ENCODE measurements at regions of chr19 and their contacts with region 1.

Region 1: GRCh38 chr19:41206926-41207750 is 11.9 kb upstream of the AXL start:
- DNase-seq: no peak
- H3K4me3 ChIP-seq: no peak overlapping the region
- H3K27ac ChIP-seq: no peak overlapping the region
- H3K27me3 ChIP-seq: no peaks in the 10 kb centered on the region
- CTCF ChIP-seq: no peak

Region 2: DNA sequence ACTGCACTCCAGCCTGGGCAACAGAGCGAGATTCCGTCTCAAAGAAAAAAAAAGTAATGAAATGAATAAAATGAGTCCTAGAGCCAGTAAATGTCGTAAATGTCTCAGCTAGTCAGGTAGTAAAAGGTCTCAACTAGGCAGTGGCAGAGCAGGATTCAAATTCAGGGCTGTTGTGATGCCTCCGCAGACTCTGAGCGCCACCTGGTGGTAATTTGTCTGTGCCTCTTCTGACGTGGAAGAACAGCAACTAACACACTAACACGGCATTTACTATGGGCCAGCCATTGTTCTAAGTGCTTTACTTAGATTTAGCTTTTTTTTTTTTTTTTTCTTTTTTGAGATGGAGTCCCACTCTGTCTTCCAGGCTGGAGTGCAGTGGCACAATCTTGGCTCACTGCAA is 62.7 kb before region 1 on chr19:
- CTCF ChIA-PET with region 1: interaction called, 10 read pairs
- POLR2A ChIA-PET with region 1: no interaction called
- DNase-seq: peak; percentile 50
- H3K4me3 ChIP-seq: no peak overlapping the region
- H3K27ac ChIP-seq: no peak overlapping the region
- H3K27me3 ChIP-seq: peaks cover 6% of the 10 kb centered on the region
- CTCF ChIP-seq: peak; percentile 79

Region 3: DNA sequence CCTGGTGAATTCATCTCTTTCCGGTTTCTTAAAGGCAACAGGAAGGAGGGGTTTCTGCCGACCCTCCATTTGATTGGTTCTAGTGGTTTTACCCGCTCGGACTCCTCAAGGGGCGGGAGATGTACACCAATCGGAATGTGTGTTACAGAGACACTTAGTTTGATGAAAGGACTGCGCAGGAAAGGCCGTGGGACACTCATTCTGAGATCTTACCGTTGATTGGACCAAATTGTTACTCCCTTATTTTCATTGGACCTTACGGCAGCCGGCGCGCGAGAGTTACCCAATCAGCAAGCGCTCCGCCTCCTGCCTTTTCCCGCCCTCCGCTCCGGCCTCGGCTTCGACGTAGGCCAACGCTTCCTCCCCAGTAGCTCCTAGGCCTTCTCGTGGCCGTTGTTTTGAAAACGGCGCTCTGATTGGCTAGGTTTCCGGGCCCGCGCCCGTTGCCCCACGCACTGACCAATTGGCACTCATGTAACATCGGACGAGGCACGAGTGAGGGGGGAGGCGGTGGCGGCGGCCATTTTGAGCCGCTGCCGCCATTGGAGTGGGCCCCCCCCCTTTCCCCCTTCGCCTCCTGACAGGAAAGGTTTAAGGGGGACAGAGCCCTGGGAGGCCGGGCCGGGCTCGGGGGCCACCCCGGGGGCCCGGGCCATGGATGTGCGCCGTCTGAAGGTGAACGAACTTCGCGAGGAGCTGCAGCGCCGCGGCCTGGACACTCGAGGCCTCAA is 56.9 kb after region 1 on chr19 and contains the start of gene HNRNPUL1:
- CTCF ChIA-PET with region 1: interaction called, 79 read pairs
- POLR2A ChIA-PET with region 1: interaction called, 13 read pairs
- DNase-seq: peak; percentile 100
- H3K4me3 ChIP-seq: peak within 1 kb of the TSS; percentile 89
- H3K27ac ChIP-seq: peak within 1 kb of the TSS; percentile 99
- H3K27me3 ChIP-seq: no peaks in the 10 kb centered on the region
- CTCF ChIP-seq: peak; percentile 36
- polyA plus RNA-seq, gene HNRNPUL1: 42.3 and 56.3 TPM in 2 replicates

Region 4: DNA sequence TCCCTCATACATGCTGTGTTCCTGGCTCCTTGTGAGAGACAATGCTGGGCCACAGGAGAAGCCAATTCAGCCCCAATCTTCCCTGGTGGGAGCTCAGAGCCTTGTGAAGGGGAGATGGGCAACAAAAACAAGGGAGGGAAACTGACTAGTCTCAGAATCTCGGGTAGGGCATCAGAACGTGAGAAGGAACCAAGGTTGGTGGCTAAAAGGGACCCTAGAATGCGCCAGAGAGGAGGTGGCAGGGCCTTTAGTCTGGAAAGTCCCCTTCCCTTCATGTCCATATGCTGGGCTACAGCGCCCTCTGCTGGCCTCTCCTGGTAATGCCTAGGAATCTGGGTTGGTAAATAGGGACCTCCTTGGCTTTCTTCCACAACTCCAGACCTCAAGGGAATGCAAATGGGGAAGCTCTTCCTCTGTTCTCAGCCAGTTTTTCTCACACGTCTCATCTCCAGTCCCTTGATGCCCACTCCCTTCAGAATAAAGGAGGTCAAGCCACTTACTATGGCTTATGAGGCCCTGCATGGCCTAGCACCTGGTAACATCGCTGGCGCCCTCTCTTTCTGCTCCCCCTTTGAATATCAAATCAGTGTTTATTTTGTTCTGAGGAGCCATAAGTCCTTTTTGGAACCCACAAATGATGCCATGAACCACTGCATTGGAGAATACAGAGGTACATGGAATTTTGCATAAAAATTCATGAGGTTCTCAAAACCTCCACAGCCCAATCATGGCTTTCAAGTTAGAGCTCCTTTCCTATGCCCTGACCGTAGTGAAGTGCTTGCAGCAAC is 101.4 kb after region 1 on chr19:
- CTCF ChIA-PET with region 1: interaction called, 36 read pairs
- POLR2A ChIA-PET with region 1: no interaction called
- DNase-seq: peak; percentile 69
- H3K4me3 ChIP-seq: peak overlapping the region; percentile 93
- H3K27ac ChIP-seq: peak overlapping the region; percentile 47
- H3K27me3 ChIP-seq: no peaks in the 10 kb centered on the region
- CTCF ChIP-seq: peak; percentile 97